H1 (cell line): ENCODE measurements at regions of chr12 and their contacts with region 1.

Region 1: GRCh38 chr12:130775953-130776856 is 60.1 kb upstream of the RIMBP2 start:
- DNase-seq: peak in 1 of 2 experiments; percentile 71
- H3K4me3 ChIP-seq: peak overlapping the region; percentile 12 to 53 (median 27); a peak in 7 of 8 replicates
- H3K27ac ChIP-seq: no peak overlapping the region
- H3K4me1 ChIP-seq: peaks cover 2 to 10% (median 3%) of the 10 kb centered on the region in 4 experiments; a peak in 6 of 7 replicates
- H3K27me3 ChIP-seq: peaks cover 0 to 4% (median under 1%) of the 10 kb centered on the region in 4 experiments; a peak in 2 of 7 replicates
- CTCF ChIP-seq: 0 out of 4 replicates have a peak, but pooled peaks of 1 of the 3 experiments have one; percentile 1
- EP300 ChIP-seq: no peak
- POLR2A ChIP-seq: no peak
- RAD21 ChIP-seq: no peak; a peak in 1 of 4 replicates

Region 2: DNA sequence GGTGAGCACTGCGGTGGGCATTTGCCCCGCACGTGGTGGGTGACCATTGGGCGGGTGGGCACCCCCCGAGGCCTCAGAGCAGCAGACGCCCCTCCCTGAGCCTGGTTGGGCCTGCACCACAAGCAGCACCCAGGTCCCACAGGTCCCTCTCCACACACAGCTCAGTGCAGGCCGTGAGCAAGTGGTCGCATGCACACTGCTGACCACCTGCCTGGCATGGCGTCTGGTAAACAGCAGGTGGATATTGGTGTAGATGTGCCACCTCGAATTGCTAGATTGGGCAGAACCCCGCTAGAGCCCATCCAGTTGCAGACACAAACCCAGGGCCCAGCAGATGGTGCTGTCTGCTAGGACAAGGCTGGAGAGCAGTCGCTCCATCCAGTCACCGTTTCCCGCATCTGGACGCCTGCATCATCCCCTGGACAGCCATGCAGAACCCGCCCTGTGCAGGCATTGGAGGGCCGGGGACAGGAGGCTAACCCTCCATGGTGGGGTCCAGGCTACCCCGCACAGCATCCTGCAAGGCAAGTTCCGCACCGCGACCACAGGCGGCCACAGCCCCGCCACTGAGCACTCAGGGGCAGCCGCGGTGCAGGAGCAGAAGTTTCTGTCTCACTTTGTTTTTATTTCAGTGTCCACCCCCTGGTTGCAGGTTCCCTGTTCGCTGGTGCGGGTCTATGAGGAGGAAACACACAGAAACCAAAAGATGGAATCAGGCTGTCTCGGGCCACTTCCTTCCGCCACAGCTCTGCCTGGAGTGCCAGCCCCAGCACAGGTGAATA is 14.5 kb before region 1 on chr12:
- CTCF ChIA-PET with region 1: interaction called, 12 read pairs
- POLR2A ChIA-PET with region 1: interaction called, 3 read pairs
- DNase-seq: peak in 1 of 2 experiments; percentile 80
- H3K4me3 ChIP-seq: no peak overlapping the region
- H3K27ac ChIP-seq: no peak overlapping the region
- H3K4me1 ChIP-seq: no peaks in the 10 kb centered on the region
- H3K27me3 ChIP-seq: peaks cover 0 to 6% (median 0%) of the 10 kb centered on the region in 4 experiments; a peak in 1 of 7 replicates
- CTCF ChIP-seq: peak; percentile 81 to 86 (median 83)
- EP300 ChIP-seq: no peak
- POLR2A ChIP-seq: no peak
- RAD21 ChIP-seq: peak; percentile 94 to 95

Region 3: DNA sequence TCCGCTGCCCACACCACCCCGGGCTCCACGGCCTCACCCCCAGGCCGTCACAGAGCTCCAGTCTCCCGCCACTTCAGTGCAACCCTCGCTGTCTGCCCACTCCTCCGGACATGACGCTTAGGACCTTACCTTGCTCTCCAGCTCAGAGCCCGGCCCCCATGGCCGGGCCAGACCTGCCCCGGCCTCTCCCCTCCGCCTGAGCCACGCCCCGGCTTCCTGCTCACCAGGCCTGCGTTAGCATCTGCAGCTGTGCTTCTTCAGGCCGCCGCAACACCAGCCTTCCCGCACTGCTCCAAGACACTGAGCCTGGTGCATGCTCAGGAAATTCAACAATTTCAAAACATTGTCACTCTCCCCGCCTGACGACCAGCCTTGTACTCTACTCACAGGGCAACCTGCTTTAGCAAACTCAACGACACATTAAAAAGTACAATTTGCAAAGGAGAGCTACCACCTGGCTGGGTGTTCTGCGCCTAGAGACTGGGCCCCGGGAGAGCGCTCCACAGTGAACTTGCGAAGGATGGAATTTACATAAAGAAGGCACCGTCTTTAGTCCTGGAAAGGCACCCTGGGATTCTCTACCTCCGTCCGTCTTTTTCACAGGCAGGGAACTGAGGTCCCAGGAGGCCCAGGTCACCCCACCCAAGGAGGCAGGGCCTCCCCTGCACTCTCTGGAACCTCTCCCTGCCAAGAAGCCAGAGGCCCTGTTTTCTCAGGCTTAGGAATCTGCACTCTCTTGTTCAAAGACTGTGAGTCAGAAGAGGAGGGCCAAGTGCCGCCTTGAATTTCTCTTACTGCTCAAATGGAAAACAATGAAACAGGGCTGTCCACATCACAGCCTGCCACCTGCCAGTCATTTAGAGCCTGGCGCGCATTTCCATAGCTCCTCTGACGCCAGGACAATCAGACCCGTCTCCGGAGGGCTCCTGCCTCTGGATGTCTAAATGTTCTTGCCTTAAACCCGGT is 11.5 kb after region 1 on chr12:
- CTCF ChIA-PET with region 1: interaction called, 5 read pairs
- POLR2A ChIA-PET with region 1: interaction called, 15 read pairs
- DNase-seq: peak in 1 of 2 experiments; percentile 73
- H3K4me3 ChIP-seq: peak overlapping the region in 3 of 4 experiments; percentile 2 to 44 (median 17); a peak in 4 of 8 replicates
- H3K27ac ChIP-seq: peak overlapping the region; percentile 26; the same call in 1 of the 2 replicates
- H3K4me1 ChIP-seq: peaks cover 4 to 26% (median 21%) of the 10 kb centered on the region in 4 experiments; a peak in 6 of 7 replicates
- H3K27me3 ChIP-seq: no peaks in the 10 kb centered on the region
- CTCF ChIP-seq: no peak
- EP300 ChIP-seq: no peak
- POLR2A ChIP-seq: no peak
- RAD21 ChIP-seq: no peak; a peak in 1 of 4 replicates